ENCODE measurements at regions of chr4 and their contacts with region 1.

Region 1: DNA sequence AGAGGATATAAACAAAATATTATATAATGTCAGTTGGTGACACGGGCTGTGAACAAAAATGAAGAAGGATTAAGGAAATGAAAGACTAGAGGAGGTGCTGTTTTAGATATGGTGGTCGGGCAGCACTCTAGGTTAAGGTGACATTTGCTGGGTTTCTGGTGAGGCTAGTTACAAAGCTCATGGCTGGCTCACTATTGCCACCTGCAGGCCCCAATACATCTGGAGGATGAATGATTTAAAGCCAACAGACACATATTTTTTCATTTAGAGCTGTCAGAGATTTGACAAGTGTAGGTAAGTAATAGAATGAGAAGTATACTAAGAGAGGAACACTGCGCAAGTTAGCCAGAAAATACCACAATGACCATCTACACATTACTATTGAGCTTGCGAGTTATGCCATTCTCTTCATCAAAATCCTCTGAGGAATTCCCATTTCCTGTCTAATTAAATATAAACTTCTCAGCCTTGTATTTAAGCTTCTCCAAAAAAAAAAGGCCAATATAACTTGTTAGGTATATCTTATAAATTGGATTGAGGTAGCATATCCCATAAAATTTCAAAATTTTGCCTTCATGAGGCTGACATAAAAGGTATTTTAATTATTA is 6.4 kb upstream of the FGG start:
- DNase-seq: peak; percentile 77
- H3K4me3 Mint-ChIP-seq: no peak overlapping the region
- H3K27ac Mint-ChIP-seq: no peak overlapping the region
- H3K4me1 Mint-ChIP-seq: peaks cover 10% of the 10 kb centered on the region
- H3K27me3 Mint-ChIP-seq: peaks cover under 1% of the 10 kb centered on the region

Region 2: GRCh38 chr4:154086247-154086646 is 532.6 kb before region 1 on chr4:
- CTCF ChIA-PET with region 1: no interaction called
- intact Hi-C with region 1: no loop called
- DNase-seq: no peak
- H3K4me3 Mint-ChIP-seq: no peak overlapping the region
- H3K27ac Mint-ChIP-seq: no peak overlapping the region
- H3K4me1 Mint-ChIP-seq: no peaks in the 10 kb centered on the region
- H3K27me3 Mint-ChIP-seq: peaks cover 2% of the 10 kb centered on the region

Region 3: GRCh38 chr4:154349829-154350228 is 269.0 kb before region 1 on chr4:
- CTCF ChIA-PET with region 1: no interaction called
- intact Hi-C with region 1: loop called (anchors 5 kb)
- DNase-seq: no peak
- H3K4me3 Mint-ChIP-seq: no peak overlapping the region
- H3K27ac Mint-ChIP-seq: no peak overlapping the region
- H3K4me1 Mint-ChIP-seq: no peaks in the 10 kb centered on the region
- H3K27me3 Mint-ChIP-seq: peaks cover 3% of the 10 kb centered on the region

Region 4: GRCh38 chr4:154559494-154560418 is 59.1 kb before region 1 on chr4:
- CTCF ChIA-PET with region 1: interaction called, 39 read pairs
- intact Hi-C with region 1: loop called (anchors 1 kb)
- DNase-seq: no peak
- H3K4me3 Mint-ChIP-seq: no peak overlapping the region
- H3K27ac Mint-ChIP-seq: no peak overlapping the region
- H3K4me1 Mint-ChIP-seq: no peaks in the 10 kb centered on the region
- H3K27me3 Mint-ChIP-seq: peaks cover 4% of the 10 kb centered on the region

Region 5: GRCh38 chr4:154634058-154634457 is 15.2 kb after region 1 on chr4:
- CTCF ChIA-PET with region 1: interaction called, 10 read pairs
- intact Hi-C with region 1: no loop called
- DNase-seq: no peak
- H3K4me3 Mint-ChIP-seq: no peak overlapping the region
- H3K27ac Mint-ChIP-seq: no peak overlapping the region
- H3K4me1 Mint-ChIP-seq: no peaks in the 10 kb centered on the region
- H3K27me3 Mint-ChIP-seq: peaks cover 20% of the 10 kb centered on the region

Measured in activated naive CD4-positive, alpha-beta T cell treated with anti-CD3 and anti-CD28 coated beads for 36 hours (primary cell).